ENCODE measurements at regions of chr1 and their contacts with region 1.

Region 1: GRCh38 chr1:27300341-27301051 is 21.5 kb upstream of the TMEM222 start:
- DNase-seq: peak; percentile 77
- ATAC-seq: peak; percentile 97
- H3K4me3 Mint-ChIP-seq: no peak overlapping the region
- H3K27ac Mint-ChIP-seq: no peak overlapping the region
- H3K4me1 Mint-ChIP-seq: peaks cover 4% of the 10 kb centered on the region
- H3K27me3 Mint-ChIP-seq: no peaks in the 10 kb centered on the region
- CTCF ChIP-seq: peak; percentile 99

Region 2: GRCh38 chr1:27102707-27103491 is 197.6 kb before region 1 on chr1:
- CTCF ChIA-PET with region 1: interaction called, 35 read pairs
- POLR2A ChIA-PET with region 1: interaction called, 3 read pairs
- intact Hi-C with region 1: no loop called
- DNase-seq: peak; percentile 86
- ATAC-seq: peak; percentile 81
- H3K4me3 Mint-ChIP-seq: no peak overlapping the region
- H3K27ac Mint-ChIP-seq: no peak overlapping the region
- H3K4me1 Mint-ChIP-seq: peaks cover 23% of the 10 kb centered on the region
- H3K27me3 Mint-ChIP-seq: no peaks in the 10 kb centered on the region
- CTCF ChIP-seq: peak; percentile 93

Region 3: GRCh38 chr1:27241677-27242076 is 58.8 kb before region 1 on chr1:
- CTCF ChIA-PET with region 1: interaction called, 12 read pairs
- POLR2A ChIA-PET with region 1: no interaction called
- intact Hi-C with region 1: no loop called
- DNase-seq: no peak
- ATAC-seq: no peak
- H3K4me3 Mint-ChIP-seq: no peak overlapping the region
- H3K27ac Mint-ChIP-seq: no peak overlapping the region
- H3K4me1 Mint-ChIP-seq: peaks cover 12% of the 10 kb centered on the region
- H3K27me3 Mint-ChIP-seq: no peaks in the 10 kb centered on the region
- CTCF ChIP-seq: no peak

Region 4: DNA sequence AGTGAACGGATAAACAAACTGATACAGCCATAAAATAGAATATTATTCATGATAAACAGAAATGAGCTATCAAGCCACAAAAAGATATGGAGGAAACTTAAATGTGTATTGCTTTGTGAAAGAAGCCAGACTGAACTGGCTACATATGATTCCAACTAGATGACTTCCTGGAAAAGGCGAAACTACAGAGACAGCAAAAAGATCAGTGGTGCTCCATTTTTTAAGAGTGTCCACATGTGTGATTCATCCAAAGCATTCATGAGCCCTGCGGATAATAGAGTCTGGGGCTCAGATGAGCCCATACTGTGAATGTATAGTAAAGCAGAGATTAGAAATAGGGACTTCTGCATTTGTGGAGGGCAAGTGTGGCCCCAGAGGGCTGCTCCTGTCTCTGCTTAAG is 13.7 kb after region 1 on chr1:
- CTCF ChIA-PET with region 1: interaction called, 28 read pairs
- POLR2A ChIA-PET with region 1: interaction called, 3 read pairs
- intact Hi-C with region 1: no loop called
- DNase-seq: no peak
- ATAC-seq: no peak
- H3K4me3 Mint-ChIP-seq: no peak overlapping the region
- H3K27ac Mint-ChIP-seq: no peak overlapping the region
- H3K4me1 Mint-ChIP-seq: no peaks in the 10 kb centered on the region
- H3K27me3 Mint-ChIP-seq: no peaks in the 10 kb centered on the region
- CTCF ChIP-seq: no peak

Region 5: GRCh38 chr1:27341525-27342252 is 41.2 kb after region 1 on chr1 and contains the start of gene SYTL1:
- CTCF ChIA-PET with region 1: interaction called, 13 read pairs
- POLR2A ChIA-PET with region 1: interaction called, 3 read pairs
- intact Hi-C with region 1: no loop called
- DNase-seq: peak; percentile 85
- ATAC-seq: peak; percentile 70
- H3K4me3 Mint-ChIP-seq: peak within 1 kb of the TSS; percentile 84
- H3K27ac Mint-ChIP-seq: peak within 1 kb of the TSS; percentile 89
- H3K4me1 Mint-ChIP-seq: peaks cover 39% of the 10 kb centered on the region
- H3K27me3 Mint-ChIP-seq: no peaks in the 10 kb centered on the region
- CTCF ChIP-seq: no peak
- total RNA-seq, gene SYTL1: 77.7 to 80.6 TPM

Region 6: DNA sequence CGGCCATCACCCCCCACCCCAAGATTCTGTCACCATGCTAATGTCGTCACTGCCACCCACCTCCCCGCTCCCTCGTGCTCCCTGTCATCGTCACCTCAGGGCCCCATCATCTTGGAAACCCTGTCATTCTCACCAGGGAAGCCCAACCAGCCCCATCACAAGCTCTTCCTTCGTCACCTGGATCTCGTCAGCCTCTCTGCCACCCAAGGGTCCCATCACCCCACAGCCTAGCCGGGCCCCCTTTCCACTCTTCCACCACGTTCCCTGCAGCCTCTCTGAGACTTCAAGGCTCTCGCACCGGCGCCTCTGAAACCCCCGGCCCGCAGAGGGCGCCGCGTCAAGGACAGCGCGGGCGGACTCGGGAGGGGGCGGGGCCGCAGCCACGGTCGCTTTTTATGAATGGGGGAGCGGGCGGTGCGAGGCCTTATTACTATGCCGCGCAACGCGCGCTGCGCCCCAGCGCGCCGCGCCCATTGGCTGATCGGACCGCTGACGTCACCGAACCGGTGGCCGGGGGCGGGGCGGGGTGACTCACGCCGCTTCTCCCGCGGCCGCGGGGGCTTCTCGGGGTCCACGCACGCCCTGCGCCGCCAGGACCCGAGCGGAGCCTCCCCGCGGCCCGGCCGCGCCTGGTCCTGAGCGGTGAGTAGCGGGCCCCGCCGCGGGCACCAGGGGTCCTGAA is 91.7 kb after region 1 on chr1 and contains the start of gene GPR3:
- CTCF ChIA-PET with region 1: interaction called, 293 read pairs
- POLR2A ChIA-PET with region 1: interaction called, 3 read pairs
- intact Hi-C with region 1: loop called (anchors 2 kb)
- DNase-seq: peak; percentile 96
- ATAC-seq: peak; percentile 92
- H3K4me3 Mint-ChIP-seq: peak within 1 kb of the TSS; percentile 65
- H3K27ac Mint-ChIP-seq: peak within 1 kb of the TSS; percentile 89
- H3K4me1 Mint-ChIP-seq: peaks cover 17% of the 10 kb centered on the region
- H3K27me3 Mint-ChIP-seq: no peaks in the 10 kb centered on the region
- CTCF ChIP-seq: peak; percentile 43
- total RNA-seq, gene GPR3: 1.1 to 1.7 TPM

Region 7: DNA sequence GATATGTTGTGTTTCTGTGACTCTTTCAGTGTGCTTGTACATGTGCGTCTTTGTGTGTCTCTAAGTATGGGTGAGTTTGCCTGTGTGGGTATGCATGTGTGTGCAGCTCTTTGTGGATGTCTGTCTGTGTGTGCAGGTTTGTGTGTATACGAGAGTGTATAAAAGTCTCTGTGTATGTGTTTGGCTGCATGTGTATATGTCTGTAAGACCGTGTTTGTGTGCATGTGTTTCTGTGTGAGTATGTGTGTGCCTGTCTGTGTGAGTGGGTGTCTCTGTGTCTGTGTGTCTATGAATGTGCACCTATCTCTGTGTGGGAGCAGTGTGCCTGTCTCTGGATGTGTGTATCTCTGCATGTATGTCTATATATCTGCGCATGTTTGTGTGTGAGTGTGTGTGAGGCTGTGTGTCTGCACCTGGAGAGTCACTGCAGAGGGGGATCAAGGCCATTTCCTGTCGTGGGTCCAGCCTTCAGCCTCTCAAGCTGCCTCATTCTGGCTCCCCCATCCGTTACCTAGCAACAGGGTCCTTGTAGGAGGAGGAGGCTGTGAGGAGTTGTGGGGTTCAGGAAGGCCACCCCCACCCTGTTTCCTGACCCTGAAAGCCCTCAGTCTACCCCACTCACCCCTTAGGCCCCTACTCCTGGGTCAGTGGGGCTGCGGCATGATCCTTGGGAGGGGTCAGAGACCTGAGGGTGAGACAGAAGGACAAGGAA is 324.1 kb after region 1 on chr1:
- CTCF ChIA-PET with region 1: no interaction called
- POLR2A ChIA-PET with region 1: no interaction called
- intact Hi-C with region 1: no loop called
- DNase-seq: peak; percentile 42
- ATAC-seq: peak; percentile 46
- H3K4me3 Mint-ChIP-seq: no peak overlapping the region
- H3K27ac Mint-ChIP-seq: no peak overlapping the region
- H3K4me1 Mint-ChIP-seq: peaks cover 24% of the 10 kb centered on the region
- H3K27me3 Mint-ChIP-seq: no peaks in the 10 kb centered on the region
- CTCF ChIP-seq: no peak

Measured in activated CD8-positive, alpha-beta T cell treated with anti-CD3 and anti-CD28 coated beads for 36 hours (primary cell).